Activated CD4-positive, alpha-beta memory T cell treated with anti-CD3 and anti-CD28 coated beads for 36 hours (primary cell): ENCODE measurements at regions of chr6 and their contacts with region 1.

Region 1: DNA sequence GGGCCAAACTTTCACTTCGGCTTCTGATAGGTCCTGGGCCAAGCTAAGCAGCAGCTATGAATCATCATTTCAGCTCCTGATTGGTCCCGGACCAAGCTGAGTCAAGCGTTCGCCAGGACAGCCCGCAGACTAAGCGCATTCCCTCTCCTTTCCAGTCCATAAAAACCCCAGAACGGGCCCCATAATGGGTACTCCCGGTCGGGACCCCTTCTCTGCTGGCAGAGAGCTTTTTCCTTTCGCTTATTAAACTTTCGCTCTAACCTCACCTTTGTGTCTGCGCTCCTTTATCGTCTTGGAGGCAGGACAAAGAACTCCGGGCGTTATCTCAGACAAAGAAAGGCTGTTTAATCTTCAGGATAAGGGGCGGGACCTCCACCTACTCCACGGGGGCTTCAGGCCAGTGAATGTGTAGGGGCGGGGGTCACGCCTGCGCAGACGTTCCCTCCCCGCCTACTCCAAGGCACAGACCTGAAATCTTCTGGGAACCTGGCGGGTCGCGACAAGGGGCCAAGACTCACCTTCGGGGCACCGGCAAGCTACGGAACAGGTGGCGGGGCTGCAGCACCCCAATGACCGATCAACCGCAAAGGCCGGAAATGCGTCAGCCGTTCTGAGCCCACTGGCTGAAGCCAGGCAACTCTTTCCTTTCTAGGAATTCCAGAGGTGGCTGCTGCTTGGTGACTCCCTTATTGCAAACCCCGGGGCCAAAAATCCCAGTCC is at the start of gene ZSCAN31:
- DNase-seq: peak; percentile 88
- H3K4me3 Mint-ChIP-seq: no peak within 1 kb of the TSS
- H3K27ac Mint-ChIP-seq: no peak within 1 kb of the TSS
- H3K4me1 Mint-ChIP-seq: no peaks in the 10 kb centered on the region
- H3K27me3 Mint-ChIP-seq: no peaks in the 10 kb centered on the region
- total RNA-seq, gene ZSCAN31: 0.77 to 1.6 TPM

Region 2: GRCh38 chr6:28207510-28208110 is 128.1 kb before region 1 on chr6:
- CTCF ChIA-PET with region 1: no interaction called
- POLR2A ChIA-PET with region 1: no interaction called
- intact Hi-C with region 1: loop called (anchors 5 kb)
- DNase-seq: peak; percentile 43
- H3K4me3 Mint-ChIP-seq: peak overlapping the region; percentile 70
- H3K27ac Mint-ChIP-seq: no peak overlapping the region
- H3K4me1 Mint-ChIP-seq: peaks cover 19% of the 10 kb centered on the region
- H3K27me3 Mint-ChIP-seq: peaks cover 66% of the 10 kb centered on the region

Region 3: GRCh38 chr6:28349892-28350737 is 14.4 kb after region 1 on chr6 and contains the start of gene ZKSCAN3:
- CTCF ChIA-PET with region 1: interaction called, 15 read pairs
- POLR2A ChIA-PET with region 1: no interaction called
- intact Hi-C with region 1: loop called (anchors 1 kb)
- DNase-seq: peak; percentile 94
- H3K4me3 Mint-ChIP-seq: peak within 1 kb of the TSS; percentile 100
- H3K27ac Mint-ChIP-seq: peak within 1 kb of the TSS; percentile 93
- H3K4me1 Mint-ChIP-seq: peaks cover 20% of the 10 kb centered on the region
- H3K27me3 Mint-ChIP-seq: peaks cover 6% of the 10 kb centered on the region
- total RNA-seq, gene ZKSCAN3: 2.2 to 2.7 TPM

Region 4: GRCh38 chr6:28383235-28384142 is 47.8 kb after region 1 on chr6:
- CTCF ChIA-PET with region 1: no interaction called
- POLR2A ChIA-PET with region 1: no interaction called
- intact Hi-C with region 1: no loop called
- DNase-seq: peak; percentile 42
- H3K4me3 Mint-ChIP-seq: peak overlapping the region; percentile 33
- H3K27ac Mint-ChIP-seq: no peak overlapping the region
- H3K4me1 Mint-ChIP-seq: no peaks in the 10 kb centered on the region
- H3K27me3 Mint-ChIP-seq: no peaks in the 10 kb centered on the region